Uterus (tissue), 4 donors: ENCODE measurements at regions of chr11 and their contacts with region 1.

Region 1: GRCh38 chr11:116691771-116692177 is 81.0 kb downstream of the BUD13 start:
- DNase-seq: peak; percentile 24 to 37
- H3K4me3 ChIP-seq: no peak overlapping the region
- H3K27ac ChIP-seq: no peak overlapping the region
- H3K4me1 ChIP-seq: no peaks in the 10 kb centered on the region
- H3K27me3 ChIP-seq: no peaks in the 10 kb centered on the region
- CTCF ChIP-seq: peak; percentile 71 to 80 (median 76)
- POLR2A ChIP-seq: no peak

Region 2: DNA sequence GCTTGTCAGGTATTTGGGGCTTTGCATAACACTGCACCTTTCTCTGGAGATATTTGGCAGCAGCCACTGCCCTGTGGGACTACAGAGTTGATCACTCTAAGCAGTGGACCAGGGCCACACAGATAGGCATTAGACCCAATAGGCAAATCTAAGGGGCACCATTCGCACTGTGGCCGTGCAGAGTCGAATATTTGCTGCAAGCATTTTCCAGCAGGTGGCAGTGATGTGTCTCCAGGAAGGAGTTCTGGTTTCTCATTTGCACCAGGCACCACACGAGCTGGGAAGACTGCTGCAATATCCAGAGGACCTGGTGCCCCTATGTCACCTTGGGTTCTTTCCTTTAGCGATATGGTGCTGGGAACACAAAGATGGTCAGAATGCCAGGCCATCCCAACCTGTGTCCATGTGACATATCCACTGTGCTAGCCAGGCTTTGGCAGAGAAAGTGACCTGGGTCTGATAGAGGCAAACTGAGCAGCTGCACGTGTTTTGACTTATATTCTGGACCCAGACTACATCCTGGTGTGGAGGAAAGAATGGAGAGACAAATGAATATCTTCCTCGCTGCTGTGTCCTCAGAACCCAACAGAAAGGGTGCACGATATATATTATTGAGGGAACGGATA is 237.6 kb before region 1 on chr11:
- intact Hi-C with region 1: loop called (anchors 5 kb)
- DNase-seq: peak; percentile 52 to 61
- H3K4me3 ChIP-seq: no peak overlapping the region
- H3K27ac ChIP-seq: no peak overlapping the region
- H3K4me1 ChIP-seq: no peaks in the 10 kb centered on the region
- H3K27me3 ChIP-seq: no peaks in the 10 kb centered on the region
- CTCF ChIP-seq: peak; percentile 57 to 72 (median 62)
- POLR2A ChIP-seq: no peak

Region 3: GRCh38 chr11:116595305-116595880 is 96.4 kb before region 1 on chr11:
- intact Hi-C with region 1: no loop called
- DNase-seq: no peak
- H3K4me3 ChIP-seq: no peak overlapping the region
- H3K27ac ChIP-seq: no peak overlapping the region
- H3K4me1 ChIP-seq: peaks cover 6 to 11% of the 10 kb centered on the region in 2 donors
- H3K27me3 ChIP-seq: no peaks in the 10 kb centered on the region
- CTCF ChIP-seq: no peak
- POLR2A ChIP-seq: no peak